PC-3 (cell line): ENCODE measurements at regions of chr2 and their contacts with region 1.

Region 1: DNA sequence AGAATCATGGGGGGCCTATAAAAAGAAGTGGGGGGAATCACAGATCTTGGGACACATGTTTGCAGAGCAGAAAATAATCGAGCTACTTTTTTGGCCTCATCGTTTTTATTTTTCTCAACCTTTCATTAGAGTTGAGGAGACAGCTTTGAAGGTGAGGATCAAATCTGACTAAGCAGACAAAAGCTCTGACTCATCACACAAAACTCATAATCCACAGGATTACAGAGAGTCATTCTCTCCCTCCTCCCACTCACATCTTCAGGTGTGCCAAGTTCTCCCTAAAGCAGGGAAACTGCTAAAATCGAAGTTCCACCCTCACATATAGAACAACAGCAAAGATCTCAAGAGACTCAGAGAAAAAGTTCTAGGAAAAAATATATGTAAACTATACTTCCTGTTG is 15.6 kb downstream of the BAZ2B start:
- DNase-seq: peak; percentile 92
- ATAC-seq: peak; percentile 98
- H3K4me3 ChIP-seq: peak overlapping the region; percentile 29; the same call in 1 of the 2 replicates
- H3K27ac ChIP-seq: peak overlapping the region; percentile 50
- H3K4me1 ChIP-seq: peaks cover 15% of the 10 kb centered on the region
- H3K27me3 ChIP-seq: no peaks in the 10 kb centered on the region
- CTCF ChIP-seq: no peak

Region 2: DNA sequence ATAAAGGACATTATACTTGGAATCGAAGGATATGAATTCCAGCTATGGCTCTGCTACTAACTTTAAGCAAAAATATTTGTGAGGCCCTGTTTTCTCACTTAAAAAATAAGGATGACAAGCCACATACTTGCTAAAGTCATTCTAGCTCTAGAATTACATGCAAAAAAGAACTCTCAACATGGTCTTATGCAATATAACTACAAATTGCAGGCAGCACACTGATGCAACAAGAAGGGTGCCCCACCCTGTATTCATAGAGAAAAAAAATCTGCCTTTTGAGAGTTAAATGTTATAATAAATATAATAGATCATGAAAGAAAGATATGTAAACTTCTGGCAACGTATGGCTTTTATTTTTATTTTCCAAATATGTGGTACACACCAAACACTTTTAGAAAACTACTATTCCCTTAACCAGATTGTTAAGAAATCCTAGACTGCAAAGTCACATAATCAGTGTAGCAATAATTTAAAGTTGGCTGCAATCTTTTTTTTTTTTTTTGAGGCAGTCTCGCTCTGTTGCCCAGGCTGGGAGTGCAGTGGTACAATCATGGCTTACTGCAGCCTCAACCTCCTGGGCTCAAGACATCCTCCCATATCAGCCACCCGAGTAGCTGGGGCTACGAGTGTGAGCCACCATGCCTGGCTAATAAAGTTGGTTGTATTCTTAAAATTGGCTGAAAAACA is 274.0 kb before region 1 on chr2:
- CTCF ChIA-PET with region 1: no interaction called
- POLR2A ChIA-PET with region 1: interaction called, 15 read pairs
- intact Hi-C with region 1: no loop called
- DNase-seq: no peak
- ATAC-seq: no peak
- H3K4me3 ChIP-seq: no peak overlapping the region
- H3K27ac ChIP-seq: no peak overlapping the region
- H3K4me1 ChIP-seq: no peaks in the 10 kb centered on the region
- H3K27me3 ChIP-seq: no peaks in the 10 kb centered on the region
- CTCF ChIP-seq: no peak

Region 3: DNA sequence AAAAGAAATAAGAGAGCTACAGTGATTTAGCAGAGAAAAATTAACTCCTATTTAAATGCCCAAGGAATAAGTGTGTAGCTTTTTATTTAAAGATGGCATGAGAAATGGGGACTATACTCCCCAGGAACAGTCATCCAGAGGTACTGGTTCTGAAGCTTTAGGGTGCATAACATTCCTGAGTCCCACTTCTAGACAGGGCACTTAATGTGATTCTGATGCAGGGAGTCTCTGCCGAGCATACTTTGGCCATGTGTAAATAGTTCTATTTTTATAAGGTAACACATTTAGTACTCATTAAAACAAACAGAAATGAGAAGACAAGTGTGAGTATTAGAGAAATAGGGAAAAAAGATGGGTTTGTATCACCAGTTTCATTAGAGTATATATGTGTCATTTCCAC is 159.6 kb before region 1 on chr2:
- CTCF ChIA-PET with region 1: no interaction called
- POLR2A ChIA-PET with region 1: no interaction called
- intact Hi-C with region 1: loop called (anchors 5 kb)
- DNase-seq: no peak
- ATAC-seq: no peak
- H3K4me3 ChIP-seq: no peak overlapping the region
- H3K27ac ChIP-seq: no peak overlapping the region
- H3K4me1 ChIP-seq: peaks cover 12% of the 10 kb centered on the region
- H3K27me3 ChIP-seq: no peaks in the 10 kb centered on the region
- CTCF ChIP-seq: no peak

Region 4: GRCh38 chr2:159497256-159497655 is 103.5 kb before region 1 on chr2:
- CTCF ChIA-PET with region 1: no interaction called
- POLR2A ChIA-PET with region 1: interaction called, 10 read pairs
- intact Hi-C with region 1: no loop called
- DNase-seq: peak; percentile 90
- ATAC-seq: peak; percentile 99
- H3K4me3 ChIP-seq: no peak overlapping the region
- H3K27ac ChIP-seq: peak overlapping the region; percentile 72
- H3K4me1 ChIP-seq: peaks cover 20% of the 10 kb centered on the region
- H3K27me3 ChIP-seq: no peaks in the 10 kb centered on the region
- CTCF ChIP-seq: no peak

Region 5: DNA sequence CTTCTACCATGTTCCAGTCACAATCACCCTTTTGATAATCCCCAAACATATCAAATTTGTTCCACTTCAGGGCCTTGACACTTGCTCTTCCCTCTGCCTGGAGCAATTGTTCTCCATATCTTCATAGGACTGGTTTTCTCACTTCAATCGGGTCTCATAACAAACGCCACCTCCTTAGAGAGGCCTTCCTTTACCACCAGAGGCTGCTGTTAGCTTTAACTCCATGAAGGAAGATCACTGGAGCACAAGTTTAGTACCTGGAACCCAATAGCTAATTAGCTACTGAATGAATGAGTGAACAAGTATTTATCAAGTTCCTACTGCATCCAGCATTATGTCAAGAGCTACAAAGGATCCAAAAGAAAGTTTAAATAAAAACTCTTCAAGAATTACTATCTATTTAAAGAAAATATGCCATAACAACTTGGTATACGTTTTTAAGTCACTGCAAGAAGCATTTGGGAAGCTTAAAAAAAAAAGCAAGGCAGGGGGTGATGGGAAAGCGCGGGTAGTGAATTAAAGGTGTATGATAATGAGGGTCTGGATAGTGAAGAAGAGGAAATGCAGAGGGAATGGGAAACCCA is 43.2 kb before region 1 on chr2:
- CTCF ChIA-PET with region 1: no interaction called
- POLR2A ChIA-PET with region 1: interaction called, 4 read pairs
- intact Hi-C with region 1: loop called (anchors 5 kb)
- DNase-seq: peak; percentile 47
- ATAC-seq: peak; percentile 67
- H3K4me3 ChIP-seq: no peak overlapping the region
- H3K27ac ChIP-seq: no peak overlapping the region
- H3K4me1 ChIP-seq: no peaks in the 10 kb centered on the region
- H3K27me3 ChIP-seq: no peaks in the 10 kb centered on the region
- CTCF ChIP-seq: peak; percentile 70